Heart left ventricle (tissue), 16 donors: ENCODE measurements at regions of chr9 and their contacts with region 1.

Region 1: GRCh38 chr9:128575469-128575868 is 23.1 kb downstream of the SPTAN1 start:
- DNase-seq: peak in 1 of 5 donors; percentile 44
- ATAC-seq: peak; percentile 47 to 92 (median 80)
- H3K4me3 ChIP-seq: no peak overlapping the region
- H3K27ac ChIP-seq: peak overlapping the region in 7 of 12 donors; percentile 6 to 60 (median 31)
- H3K4me1 ChIP-seq: peaks cover 0 to 24% (median 13%) of the 10 kb centered on the region in 12 donors
- H3K27me3 ChIP-seq: no peaks in the 10 kb centered on the region
- CTCF ChIP-seq: no peak
- POLR2A ChIP-seq: no peak

Region 2: GRCh38 chr9:128494108-128494745 is 81.2 kb before region 1 on chr9:
- intact Hi-C with region 1: no loop called
- DNase-seq: peak; percentile 63 to 76 (median 67)
- ATAC-seq: peak; percentile 48 to 80 (median 62)
- H3K4me3 ChIP-seq: no peak overlapping the region
- H3K27ac ChIP-seq: no peak overlapping the region
- H3K4me1 ChIP-seq: peaks cover 0 to 16% (median 9%) of the 10 kb centered on the region in 12 donors
- H3K27me3 ChIP-seq: no peaks in the 10 kb centered on the region
- CTCF ChIP-seq: no peak
- POLR2A ChIP-seq: no peak

Region 3: DNA sequence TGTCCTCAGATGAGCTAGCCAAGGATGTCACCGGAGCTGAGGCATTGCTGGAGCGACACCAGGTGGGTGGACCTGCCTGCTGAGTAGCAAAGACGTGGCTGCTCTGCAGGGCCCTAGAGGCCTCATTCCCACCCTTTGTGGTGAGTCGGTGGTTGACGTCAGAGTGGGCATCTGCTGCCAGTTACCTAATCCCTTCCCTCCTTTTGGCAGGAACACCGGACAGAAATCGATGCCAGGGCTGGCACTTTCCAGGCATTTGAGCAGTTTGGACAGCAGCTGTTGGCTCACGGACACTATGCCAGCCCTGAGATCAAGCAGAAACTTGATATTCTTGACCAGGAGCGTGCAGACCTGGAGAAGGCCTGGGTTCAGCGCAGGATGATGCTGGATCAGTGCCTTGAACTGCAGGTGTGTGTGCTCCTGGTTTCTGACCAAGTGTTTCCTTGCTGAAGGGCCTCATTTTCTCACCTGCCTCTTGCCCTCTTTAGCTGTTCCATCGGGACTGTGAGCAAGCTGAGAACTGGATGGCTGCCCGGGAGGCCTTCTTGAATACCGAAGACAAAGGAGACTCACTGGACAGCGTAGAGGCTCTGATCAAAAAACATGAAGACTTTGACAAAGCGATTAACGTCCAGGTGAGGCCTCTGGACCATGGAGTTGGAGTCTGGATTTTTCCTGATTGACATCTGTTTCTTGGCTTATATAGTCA is 32.3 kb after region 1 on chr9:
- intact Hi-C with region 1: loop called in 1 of 10 experiments (anchors 5 kb)
- DNase-seq: peak; percentile 80 to 95 (median 85)
- ATAC-seq: peak; percentile 97 to 98 (median 98)
- H3K4me3 ChIP-seq: no peak overlapping the region
- H3K27ac ChIP-seq: peak overlapping the region in 8 of 12 donors; percentile 13 to 76 (median 54)
- H3K4me1 ChIP-seq: peaks cover 0 to 17% (median 4%) of the 10 kb centered on the region in 12 donors
- H3K27me3 ChIP-seq: no peaks in the 10 kb centered on the region
- CTCF ChIP-seq: peak in 2 of 12 donors; percentile 7 to 13
- POLR2A ChIP-seq: no peak

Region 4: DNA sequence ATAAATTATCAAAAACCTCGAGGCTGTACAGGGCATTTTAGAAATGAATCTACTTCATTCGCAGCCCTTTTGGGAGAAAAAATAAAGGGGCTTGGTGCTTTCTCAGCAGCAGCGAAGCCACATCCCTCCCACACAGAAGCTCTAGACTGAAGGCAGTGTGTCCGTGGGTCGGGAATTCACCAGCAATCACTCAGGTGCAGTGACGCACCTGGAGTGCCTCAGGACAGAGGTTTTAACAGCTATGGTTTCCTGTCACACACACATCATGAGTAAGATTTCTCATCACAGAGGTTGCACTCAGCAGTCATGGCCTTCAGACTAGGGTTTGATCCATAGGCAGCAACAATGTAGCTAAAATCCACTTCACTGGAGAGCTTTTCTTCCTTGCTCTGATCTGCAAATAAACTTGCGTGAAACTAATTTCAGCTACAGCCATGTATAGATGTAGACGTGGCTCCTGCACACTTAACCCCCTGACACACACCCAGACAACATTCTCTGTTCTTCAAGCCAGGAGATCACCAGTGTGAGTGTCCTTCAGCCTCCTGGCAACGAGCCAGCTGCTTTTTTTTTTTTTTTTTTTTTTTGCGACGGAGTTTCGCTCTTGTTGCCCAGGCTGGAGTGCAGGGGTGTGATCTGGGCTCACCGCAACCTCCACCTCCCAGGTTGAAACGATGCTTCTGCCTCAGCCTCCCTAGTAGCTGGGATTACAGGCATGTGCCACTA is 46.4 kb after region 1 on chr9:
- intact Hi-C with region 1: loop called in 3 of 10 experiments (anchors 5 kb)
- DNase-seq: no peak
- ATAC-seq: no peak
- H3K4me3 ChIP-seq: no peak overlapping the region
- H3K27ac ChIP-seq: no peak overlapping the region
- H3K4me1 ChIP-seq: peaks cover 0 to 3% (median 0%) of the 10 kb centered on the region in 12 donors
- H3K27me3 ChIP-seq: no peaks in the 10 kb centered on the region
- CTCF ChIP-seq: no peak
- POLR2A ChIP-seq: no peak